ENCODE measurements at regions of chr6 and their contacts with region 1.

Region 1: GRCh38 chr6:32439602-32440214 is at the start of gene HLA-DRA:
- DNase-seq: no peak
- ATAC-seq: peak; percentile 80
- H3K4me3 ChIP-seq: no peak within 1 kb of the TSS
- H3K27ac ChIP-seq: no peak within 1 kb of the TSS
- H3K4me1 ChIP-seq: no peaks in the 10 kb centered on the region
- H3K27me3 ChIP-seq: no peaks in the 10 kb centered on the region
- total RNA-seq, gene HLA-DRA: 274 to 605 TPM

Region 2: GRCh38 chr6:32603888-32604287 is 164.2 kb after region 1 on chr6:
- intact Hi-C with region 1: no loop called
- DNase-seq: no peak
- ATAC-seq: peak; percentile 15
- H3K4me3 ChIP-seq: no peak overlapping the region
- H3K27ac ChIP-seq: no peak overlapping the region
- H3K4me1 ChIP-seq: no peaks in the 10 kb centered on the region
- H3K27me3 ChIP-seq: no peaks in the 10 kb centered on the region

Region 3: GRCh38 chr6:32622545-32623401 is 183.1 kb after region 1 on chr6:
- intact Hi-C with region 1: loop called in 1 of 2 experiments (anchors 10 kb)
- DNase-seq: no peak
- ATAC-seq: peak; percentile 67
- H3K4me3 ChIP-seq: no peak overlapping the region
- H3K27ac ChIP-seq: no peak overlapping the region
- H3K4me1 ChIP-seq: no peaks in the 10 kb centered on the region
- H3K27me3 ChIP-seq: no peaks in the 10 kb centered on the region

Region 4: DNA sequence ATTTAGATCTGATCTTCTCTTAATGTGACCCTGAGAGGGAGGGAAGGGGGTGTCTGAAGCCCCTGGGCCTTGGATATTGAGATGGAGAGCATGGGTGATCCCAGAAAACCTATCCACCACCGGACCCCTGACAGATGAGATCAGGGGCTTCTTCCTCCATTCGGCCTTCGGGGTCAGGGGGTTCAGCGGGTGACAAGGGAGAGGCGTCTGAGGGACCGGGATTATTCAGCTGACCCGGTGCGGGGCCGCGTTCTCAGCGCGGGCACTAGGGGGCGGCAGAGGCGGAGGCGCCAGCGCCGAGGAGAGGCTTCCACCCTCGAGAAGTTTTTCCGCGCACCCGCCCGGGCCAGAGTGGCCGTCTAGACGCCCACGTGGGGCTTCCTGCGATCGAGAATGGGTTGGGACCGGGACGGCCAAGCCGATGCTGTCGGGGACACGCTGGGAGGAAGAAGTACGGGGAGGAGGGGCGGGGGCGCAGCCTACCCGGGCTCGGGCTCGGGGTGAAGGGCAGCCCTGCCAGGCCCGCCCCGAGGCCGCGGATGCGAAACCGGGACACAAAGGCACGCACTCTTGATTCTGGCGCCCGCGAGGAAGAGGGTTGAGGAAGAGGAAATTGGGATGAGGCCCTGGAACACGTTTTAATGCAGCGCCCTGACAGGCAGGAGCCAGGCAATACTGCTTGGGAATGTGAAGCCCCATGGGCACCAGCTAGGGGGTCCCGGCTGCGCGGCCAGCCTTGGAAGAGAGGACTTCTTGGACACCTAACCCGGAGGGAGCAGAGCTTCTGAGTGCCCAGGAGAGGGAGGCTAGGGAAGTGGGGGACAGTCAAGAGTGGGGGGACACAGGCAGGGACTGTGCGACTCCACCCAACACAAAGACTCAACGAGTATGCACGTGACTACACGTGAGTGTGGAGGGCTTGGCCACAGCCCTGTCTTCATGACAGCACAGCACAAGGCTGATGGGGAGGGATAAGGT is 721.9 kb after region 1 on chr6:
- intact Hi-C with region 1: no loop called
- DNase-seq: peak; percentile 90 to 96
- ATAC-seq: peak; percentile 94
- H3K4me3 ChIP-seq: no peak overlapping the region
- H3K27ac ChIP-seq: peak overlapping the region in 1 of 2 donors; percentile 19
- H3K4me1 ChIP-seq: no peaks in the 10 kb centered on the region
- H3K27me3 ChIP-seq: no peaks in the 10 kb centered on the region

Measured in aorta (tissue), 5 donors.